ENCODE measurements at regions of chr11 and their contacts with region 1.

Region 1: DNA sequence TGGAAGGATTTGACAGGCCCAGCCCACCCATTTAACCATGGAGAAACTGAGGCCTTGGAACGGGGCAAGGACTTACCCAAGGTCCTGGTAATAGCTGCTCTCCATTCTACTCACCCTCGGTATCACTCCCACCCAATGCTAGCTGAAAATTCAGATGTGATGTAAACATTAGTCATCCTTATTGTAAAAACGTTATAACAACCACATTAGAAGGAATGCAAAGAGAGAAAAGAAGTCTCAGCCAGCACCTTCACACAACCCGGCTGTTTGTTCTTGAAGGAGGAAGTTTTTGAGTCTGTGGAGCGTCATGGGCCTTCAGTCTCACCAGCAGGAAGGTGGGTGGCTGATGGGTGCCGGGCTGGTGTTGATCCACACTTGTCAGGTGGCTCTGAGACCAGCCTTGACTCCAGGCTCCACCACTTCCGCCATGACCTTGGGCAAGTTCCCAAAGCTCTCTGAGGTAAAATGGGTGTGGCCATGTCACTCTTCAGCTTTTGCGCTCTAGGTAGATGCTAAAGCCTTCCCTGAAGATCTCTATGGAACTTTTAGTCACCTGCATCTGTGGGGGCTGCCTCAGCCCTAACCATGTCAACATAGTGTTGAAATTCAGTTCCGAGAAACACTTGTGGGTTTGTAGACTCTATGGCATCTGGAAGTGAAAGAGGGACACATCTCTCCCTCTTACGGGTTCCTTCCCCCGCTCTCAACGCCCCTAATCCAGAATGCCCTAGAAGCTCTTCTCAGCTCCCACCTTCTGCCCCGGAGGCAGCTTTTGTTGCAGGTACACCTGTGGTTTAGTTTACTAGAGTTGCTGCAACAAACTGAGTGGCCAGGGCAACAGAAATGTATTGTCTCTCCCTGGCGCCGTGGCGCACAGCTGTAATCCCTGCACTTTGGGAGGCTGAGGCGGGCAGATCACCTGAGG is 14.8 kb downstream of the CD6 start:
- DNase-seq: peak; percentile 97
- ATAC-seq: peak; percentile 76
- H3K4me3 Mint-ChIP-seq: peak overlapping the region; percentile 87
- H3K27ac Mint-ChIP-seq: peak overlapping the region; percentile 96
- H3K4me1 Mint-ChIP-seq: peaks cover 94% of the 10 kb centered on the region
- H3K27me3 Mint-ChIP-seq: no peaks in the 10 kb centered on the region

Region 2: GRCh38 chr11:61004180-61004611 is 17.9 kb after region 1 on chr11:
- CTCF ChIA-PET with region 1: interaction called, 5 read pairs
- POLR2A ChIA-PET with region 1: interaction called, 9 read pairs
- intact Hi-C with region 1: loop called (anchors 2 kb)
- DNase-seq: peak; percentile 78
- ATAC-seq: peak; percentile 58
- H3K4me3 Mint-ChIP-seq: peak overlapping the region; percentile 74
- H3K27ac Mint-ChIP-seq: peak overlapping the region; percentile 94
- H3K4me1 Mint-ChIP-seq: peaks cover 90% of the 10 kb centered on the region
- H3K27me3 Mint-ChIP-seq: no peaks in the 10 kb centered on the region

Region 3: DNA sequence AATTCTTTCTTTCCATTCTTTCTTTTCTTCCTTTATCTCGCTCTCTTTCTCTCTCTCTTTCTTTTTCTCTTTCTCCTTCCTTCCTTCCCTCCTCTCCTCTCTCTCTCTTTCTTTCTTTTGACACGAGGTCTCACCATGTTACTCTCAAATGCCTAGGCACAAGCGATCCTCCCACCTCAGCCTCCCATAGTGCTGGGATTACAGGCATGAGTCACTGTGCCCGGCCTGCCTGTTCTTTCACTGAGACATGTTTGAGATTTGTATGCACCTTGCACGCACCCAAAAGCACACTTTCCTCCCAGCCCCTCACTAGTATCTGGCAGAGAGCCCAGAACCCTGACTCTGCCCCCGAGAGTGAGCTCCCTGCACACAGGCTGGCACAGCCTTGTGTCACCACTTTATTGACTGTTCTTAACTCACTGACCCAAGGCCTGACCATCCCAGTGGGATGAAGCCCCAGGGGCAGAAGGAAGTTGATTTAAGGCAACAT is 42.1 kb after region 1 on chr11:
- CTCF ChIA-PET with region 1: interaction called, 5 read pairs
- POLR2A ChIA-PET with region 1: interaction called, 16 read pairs
- intact Hi-C with region 1: loop called (anchors 1 to 2 kb)
- DNase-seq: peak; percentile 87
- ATAC-seq: peak; percentile 45
- H3K4me3 Mint-ChIP-seq: peak overlapping the region; percentile 79
- H3K27ac Mint-ChIP-seq: peak overlapping the region; percentile 97
- H3K4me1 Mint-ChIP-seq: peaks cover 87% of the 10 kb centered on the region
- H3K27me3 Mint-ChIP-seq: no peaks in the 10 kb centered on the region

Region 4: DNA sequence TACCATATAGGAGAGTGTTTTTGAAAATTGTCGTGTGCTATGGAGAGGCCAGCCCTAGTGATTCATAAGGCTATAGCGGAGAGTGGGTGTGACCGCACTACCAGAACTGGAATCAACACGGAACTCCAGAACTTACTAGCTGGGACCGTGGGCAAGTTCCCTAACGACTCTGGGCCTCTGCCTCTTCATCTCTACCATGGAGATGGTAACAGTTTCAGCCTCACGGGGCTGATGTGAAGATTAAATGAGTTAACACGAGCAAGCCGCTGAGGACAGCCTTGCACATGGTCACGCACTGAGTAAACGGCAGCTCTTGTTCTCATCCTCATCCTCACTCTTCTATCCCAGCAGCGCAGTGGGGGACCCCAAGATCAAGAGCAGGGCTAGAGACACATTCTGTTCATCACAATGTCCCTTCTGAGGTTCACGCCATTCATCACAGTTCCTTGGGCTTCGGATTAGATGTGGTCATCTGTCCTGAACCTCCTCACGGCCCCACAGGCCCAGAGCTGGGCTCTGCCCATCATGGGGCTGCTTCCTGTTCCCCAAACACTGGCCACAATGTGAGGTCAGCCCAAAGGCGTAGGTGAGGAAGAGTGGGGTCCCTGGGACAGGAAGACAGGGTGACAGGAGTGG is 68.8 kb after region 1 on chr11:
- CTCF ChIA-PET with region 1: interaction called, 4 read pairs
- POLR2A ChIA-PET with region 1: interaction called, 17 read pairs
- intact Hi-C with region 1: no loop called
- DNase-seq: peak; percentile 79
- ATAC-seq: peak; percentile 77
- H3K4me3 Mint-ChIP-seq: peak overlapping the region; percentile 42
- H3K27ac Mint-ChIP-seq: peak overlapping the region; percentile 92
- H3K4me1 Mint-ChIP-seq: peaks cover 87% of the 10 kb centered on the region
- H3K27me3 Mint-ChIP-seq: no peaks in the 10 kb centered on the region

Region 5: DNA sequence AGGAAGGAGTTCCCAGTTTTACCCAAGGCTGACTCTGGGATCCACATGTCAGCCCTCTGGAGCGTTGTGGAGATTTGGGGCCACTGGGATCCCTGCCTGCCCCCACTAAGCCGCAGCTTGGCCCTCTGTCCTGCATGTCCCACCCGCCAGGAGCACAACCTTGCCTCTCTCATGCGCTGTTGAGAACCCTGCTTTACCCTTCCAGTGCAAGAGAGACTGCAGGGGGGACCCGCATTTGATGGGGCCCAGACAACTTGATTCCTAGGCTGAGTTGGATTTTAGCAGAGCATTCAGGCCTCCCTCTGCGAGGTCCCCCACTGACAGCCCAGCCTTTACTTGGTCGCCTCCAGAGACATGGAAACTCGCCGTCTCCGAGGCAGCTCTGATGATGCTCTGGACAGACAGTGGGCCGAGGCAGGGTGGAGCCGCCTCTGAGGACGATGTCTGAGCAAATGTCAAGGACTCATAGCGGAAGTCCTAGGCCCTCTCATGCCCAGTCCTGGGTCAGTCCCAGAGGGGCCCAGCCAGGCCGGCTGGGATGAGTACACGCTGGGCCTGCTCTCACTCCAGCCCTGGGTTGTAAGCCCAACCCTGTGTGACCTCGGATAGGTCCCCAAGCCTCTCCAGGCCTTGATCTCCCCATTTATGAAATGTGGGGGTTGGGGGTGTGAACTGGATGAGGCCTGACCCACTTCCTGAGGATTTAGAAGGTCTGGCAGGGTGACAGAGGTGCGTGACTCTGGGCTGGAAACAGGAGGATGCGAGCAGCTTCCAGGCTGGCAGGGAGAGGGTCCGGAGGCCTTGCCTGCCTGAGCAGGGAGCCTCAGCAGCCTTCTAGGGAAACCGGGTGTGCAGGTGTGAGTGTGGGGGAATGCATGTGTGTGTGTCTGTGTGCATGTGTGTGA is 116.7 kb after region 1 on chr11:
- CTCF ChIA-PET with region 1: interaction called, 3 read pairs
- POLR2A ChIA-PET with region 1: interaction called, 3 read pairs
- intact Hi-C with region 1: loop called in 1 of 2 experiments (anchors 2 kb)
- DNase-seq: peak; percentile 49
- ATAC-seq: peak; percentile 16
- H3K4me3 Mint-ChIP-seq: no peak overlapping the region
- H3K27ac Mint-ChIP-seq: no peak overlapping the region
- H3K4me1 Mint-ChIP-seq: peaks cover 25% of the 10 kb centered on the region
- H3K27me3 Mint-ChIP-seq: no peaks in the 10 kb centered on the region

Measured in activated CD4-positive, alpha-beta T cell treated with anti-CD3 and anti-CD28 coated beads for 36 hours (primary cell).